ENCODE measurements at regions of chr16 and their contacts with region 1.

Region 1: GRCh38 chr16:54929090-54930004 is 1.3 kb upstream of the IRX5 start:
- DNase-seq: peak; percentile 99 to 100 (median 100)
- ATAC-seq: peak; percentile 91 to 97 (median 93)
- H3K4me3 ChIP-seq: peak overlapping the region; percentile 60 to 86 (median 74)
- H3K27ac ChIP-seq: peak overlapping the region; percentile 79 to 96 (median 90)
- H3K4me1 ChIP-seq: peaks cover 0 to 39% (median 7%) of the 10 kb centered on the region in 12 donors
- H3K27me3 ChIP-seq: peaks cover 0 to 71% (median 26%) of the 10 kb centered on the region in 9 donors
- CTCF ChIP-seq: peak in 4 of 12 donors; percentile 23 to 47 (median 30)
- POLR2A ChIP-seq: peak; percentile 49 to 60

Region 2: DNA sequence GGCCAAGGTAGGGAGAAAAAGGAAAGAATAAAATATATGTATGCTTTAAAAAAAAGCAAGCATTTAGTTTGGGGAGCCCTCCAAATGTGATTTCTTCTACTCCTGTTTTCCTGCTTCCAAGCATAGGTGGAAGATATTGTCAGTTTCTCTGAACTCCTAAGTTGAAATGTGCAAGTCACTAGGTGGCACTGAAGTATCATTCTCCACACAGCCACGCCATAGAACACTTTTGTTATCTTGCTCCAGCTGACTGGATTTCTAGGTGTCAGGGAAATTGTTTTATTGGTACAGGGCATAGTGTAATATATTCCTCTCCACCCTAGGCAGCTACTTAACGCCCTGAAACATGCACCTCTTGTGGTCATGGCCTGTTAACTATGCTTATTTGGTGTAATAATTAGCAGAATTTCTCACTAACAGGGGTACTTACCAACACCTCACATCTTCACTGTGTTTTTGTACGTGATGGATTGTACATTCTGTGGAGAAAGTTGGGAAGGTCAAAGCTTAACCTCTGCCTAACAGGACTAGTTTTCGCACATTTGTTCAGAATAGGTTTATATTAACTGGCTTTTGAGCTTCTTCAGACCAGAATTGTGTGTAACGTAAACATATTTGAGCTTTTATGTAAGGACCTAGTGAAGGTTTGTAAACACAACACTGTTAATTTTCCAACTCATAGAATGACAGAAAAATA is 1156.0 kb before region 1 on chr16:
- intact Hi-C with region 1: loop called in 1 of 10 experiments (anchors 10 kb)
- DNase-seq: peak in 4 of 5 donors; percentile 21 to 35 (median 26)
- ATAC-seq: peak; percentile 84 to 94 (median 89)
- H3K4me3 ChIP-seq: no peak overlapping the region
- H3K27ac ChIP-seq: peak overlapping the region in 10 of 12 donors; percentile 17 to 66 (median 46)
- H3K4me1 ChIP-seq: peaks cover 0 to 85% (median 37%) of the 10 kb centered on the region in 12 donors
- H3K27me3 ChIP-seq: no peaks in the 10 kb centered on the region
- CTCF ChIP-seq: peak; percentile 38 to 70 (median 60)
- POLR2A ChIP-seq: no peak

Region 3: DNA sequence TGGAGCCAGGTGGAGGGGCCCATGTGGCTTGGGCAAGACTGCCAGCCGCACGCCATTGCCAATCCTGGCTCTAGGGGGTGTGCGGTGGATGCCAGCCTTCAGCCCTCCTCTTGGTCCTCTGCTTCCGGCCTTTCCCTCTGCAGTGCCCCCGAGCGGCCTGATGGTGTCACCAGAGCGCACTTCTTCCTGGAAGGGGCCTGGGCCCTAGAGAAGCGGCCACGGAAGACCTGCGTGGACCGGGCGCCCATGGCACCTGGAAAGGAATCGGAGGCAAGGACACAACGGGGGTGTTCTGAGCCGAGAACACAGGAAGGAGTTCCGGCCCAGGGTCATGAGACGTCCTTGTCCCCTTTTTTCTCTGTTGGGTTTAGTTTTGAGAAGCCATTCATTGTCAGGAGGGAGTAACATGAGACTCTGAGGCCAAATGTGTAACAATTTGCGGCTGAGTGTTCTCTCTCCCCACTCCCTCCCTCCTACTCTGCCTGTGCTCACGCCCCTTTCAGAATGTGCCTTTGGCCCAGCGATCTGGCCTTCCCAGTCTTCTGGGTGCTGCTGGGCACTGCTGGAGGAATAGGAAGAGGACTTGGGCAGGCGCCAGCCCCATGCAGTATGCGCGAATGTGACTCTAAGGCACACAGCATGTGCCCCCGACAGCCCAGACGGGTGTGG is 735.5 kb before region 1 on chr16:
- intact Hi-C with region 1: loop called in 6 of 10 experiments (anchors 2 to 10 kb)
- DNase-seq: peak; percentile 77 to 90 (median 84)
- ATAC-seq: peak; percentile 85 to 90 (median 89)
- H3K4me3 ChIP-seq: peak overlapping the region in 10 of 12 donors; percentile 5 to 52 (median 32)
- H3K27ac ChIP-seq: peak overlapping the region; percentile 52 to 97 (median 84)
- H3K4me1 ChIP-seq: peaks cover 0 to 19% (median 8%) of the 10 kb centered on the region in 12 donors
- H3K27me3 ChIP-seq: no peaks in the 10 kb centered on the region
- CTCF ChIP-seq: peak; percentile 75 to 95 (median 87)
- POLR2A ChIP-seq: no peak

Region 4: GRCh38 chr16:54503011-54503855 is 426.1 kb before region 1 on chr16:
- intact Hi-C with region 1: loop called in 3 of 10 experiments (anchors 5 to 10 kb)
- DNase-seq: peak; percentile 69 to 92 (median 76)
- ATAC-seq: peak; percentile 91 to 96 (median 94)
- H3K4me3 ChIP-seq: no peak overlapping the region
- H3K27ac ChIP-seq: peak overlapping the region in 8 of 12 donors; percentile 54 to 87 (median 70)
- H3K4me1 ChIP-seq: peaks cover 0 to 65% (median 31%) of the 10 kb centered on the region in 12 donors
- H3K27me3 ChIP-seq: no peaks in the 10 kb centered on the region
- CTCF ChIP-seq: no peak
- POLR2A ChIP-seq: no peak

Region 5: GRCh38 chr16:54616610-54617009 is 312.7 kb before region 1 on chr16:
- intact Hi-C with region 1: no loop called
- DNase-seq: no peak
- ATAC-seq: no peak
- H3K4me3 ChIP-seq: no peak overlapping the region
- H3K27ac ChIP-seq: no peak overlapping the region
- H3K4me1 ChIP-seq: no peaks in the 10 kb centered on the region
- H3K27me3 ChIP-seq: no peaks in the 10 kb centered on the region
- CTCF ChIP-seq: no peak
- POLR2A ChIP-seq: no peak

Region 6: DNA sequence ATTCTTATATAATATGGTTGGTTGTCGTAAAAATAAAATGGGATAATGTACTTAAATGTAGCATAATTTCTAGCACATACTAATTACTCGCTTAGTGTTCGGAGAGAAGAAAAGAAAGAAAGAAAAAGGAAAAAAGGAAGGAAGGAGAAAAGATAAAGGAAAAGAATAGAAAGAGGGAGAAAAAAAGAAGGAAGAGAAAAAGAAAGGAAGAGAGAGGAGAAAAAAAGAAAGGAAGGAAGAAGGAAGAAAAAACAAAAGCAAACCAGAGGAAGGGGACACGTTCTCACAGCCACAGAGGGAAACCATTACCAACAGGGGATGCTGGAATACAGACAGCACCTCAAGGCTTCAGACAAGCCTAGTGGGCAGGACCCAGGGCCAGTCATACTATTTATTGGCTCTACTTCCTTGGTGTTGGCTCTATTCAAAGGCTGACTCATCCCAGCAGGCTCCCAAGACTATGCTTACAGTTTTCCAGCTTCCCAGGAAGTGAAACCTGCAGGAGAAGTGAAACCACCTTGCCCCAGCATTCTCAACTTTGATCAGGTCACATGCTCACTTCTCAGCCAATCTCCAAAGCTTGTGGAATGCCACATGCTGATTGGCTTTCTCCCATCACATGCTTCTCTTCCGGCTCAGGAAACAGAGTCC is 272.2 kb before region 1 on chr16:
- intact Hi-C with region 1: loop called in 1 of 10 experiments (anchors 10 kb)
- DNase-seq: peak in 1 of 5 donors; percentile 22
- ATAC-seq: peak in 2 of 4 donors; percentile 79 to 84
- H3K4me3 ChIP-seq: no peak overlapping the region
- H3K27ac ChIP-seq: no peak overlapping the region
- H3K4me1 ChIP-seq: peaks cover 0 to 35% (median 14%) of the 10 kb centered on the region in 12 donors
- H3K27me3 ChIP-seq: no peaks in the 10 kb centered on the region
- CTCF ChIP-seq: no peak
- POLR2A ChIP-seq: no peak

Region 7: DNA sequence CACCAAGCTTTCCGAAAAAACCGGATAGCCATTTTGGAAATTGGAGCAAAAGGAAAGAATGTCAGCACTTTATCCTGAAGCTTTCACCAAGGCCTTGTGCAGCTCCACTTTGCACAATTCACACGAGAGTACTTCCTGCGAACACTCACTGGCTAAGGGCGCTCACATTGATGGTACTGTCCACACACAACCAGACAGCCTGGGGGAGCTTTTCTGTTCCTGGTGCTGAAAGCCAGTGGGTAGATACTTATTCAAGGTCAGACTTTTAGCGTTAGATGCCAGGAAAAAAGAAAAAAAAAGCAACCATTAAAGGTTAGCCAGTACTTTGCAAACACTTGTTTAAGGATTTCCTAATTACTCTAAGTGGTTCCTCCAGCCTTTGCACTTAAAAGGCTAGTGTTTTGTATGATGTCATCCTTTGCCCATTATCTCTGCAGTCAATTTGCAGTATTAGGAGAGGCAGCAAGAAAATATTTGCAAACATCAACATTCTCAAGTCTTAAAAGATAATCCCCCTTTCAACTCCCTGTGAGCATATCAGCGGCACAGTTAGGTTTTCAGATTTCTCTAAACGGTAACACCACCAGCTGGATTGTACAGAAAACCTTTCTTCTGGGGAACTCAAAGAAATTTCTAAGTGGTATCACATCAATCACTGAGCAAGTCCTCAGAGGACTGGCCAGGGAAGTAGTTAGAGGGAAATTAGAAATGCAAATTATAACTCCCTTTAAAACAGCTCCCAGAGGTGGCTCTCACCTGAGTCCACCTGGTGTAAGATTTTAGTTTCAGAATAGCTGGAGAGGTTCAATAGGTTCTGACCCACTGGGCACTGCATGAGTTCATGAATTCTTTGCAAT is 242.1 kb before region 1 on chr16:
- intact Hi-C with region 1: no loop called
- DNase-seq: no peak
- ATAC-seq: no peak
- H3K4me3 ChIP-seq: no peak overlapping the region
- H3K27ac ChIP-seq: no peak overlapping the region
- H3K4me1 ChIP-seq: no peaks in the 10 kb centered on the region
- H3K27me3 ChIP-seq: no peaks in the 10 kb centered on the region
- CTCF ChIP-seq: no peak
- POLR2A ChIP-seq: no peak

Region 8: DNA sequence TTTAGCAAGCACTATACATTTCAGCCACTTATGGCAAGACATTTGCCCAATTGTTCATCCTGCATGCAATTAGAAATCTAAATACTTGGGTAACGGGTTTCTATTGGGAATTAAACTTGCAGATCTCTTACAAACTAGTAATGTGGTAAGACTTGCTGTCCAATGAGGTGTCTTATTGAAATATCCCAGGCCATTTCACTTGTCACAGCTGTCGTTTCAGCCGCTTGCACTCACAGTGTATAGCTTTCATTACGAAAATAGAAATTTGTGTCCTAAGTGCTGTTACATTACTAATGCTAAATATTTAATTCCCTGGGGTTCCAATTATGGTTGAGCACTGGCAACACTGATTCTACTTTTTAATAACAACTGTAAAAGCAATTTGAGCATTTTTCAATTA is 39.0 kb before region 1 on chr16:
- intact Hi-C with region 1: no loop called
- DNase-seq: no peak
- ATAC-seq: peak in 3 of 4 donors; percentile 75 to 85 (median 76)
- H3K4me3 ChIP-seq: peak overlapping the region in 5 of 12 donors; percentile 11 to 37 (median 24)
- H3K27ac ChIP-seq: peak overlapping the region in 4 of 12 donors; percentile 11 to 49 (median 34)
- H3K4me1 ChIP-seq: peaks cover 0 to 5% (median 0%) of the 10 kb centered on the region in 12 donors
- H3K27me3 ChIP-seq: no peaks in the 10 kb centered on the region
- CTCF ChIP-seq: no peak
- POLR2A ChIP-seq: no peak

Region 9: DNA sequence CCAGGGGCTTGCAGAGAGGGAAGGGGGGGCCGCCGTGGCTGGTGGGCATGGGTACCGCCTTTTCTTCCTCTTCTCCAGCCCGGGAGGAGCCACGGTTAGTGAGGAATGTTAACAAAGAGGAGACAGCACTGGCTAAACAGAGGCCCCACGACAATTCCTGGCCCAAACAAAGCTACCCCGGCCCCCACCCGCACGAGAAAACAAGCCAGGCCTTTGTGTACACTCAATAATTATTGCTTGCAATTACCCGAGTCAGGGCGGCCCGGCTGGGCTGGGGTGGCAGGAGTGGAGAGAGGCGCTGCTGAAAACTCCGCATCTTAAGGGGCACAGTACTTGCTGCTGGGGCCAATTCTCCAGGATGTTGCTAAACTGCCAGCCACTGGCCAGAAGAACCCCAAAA is 57.7 kb after region 1 on chr16:
- intact Hi-C with region 1: no loop called
- DNase-seq: no peak
- ATAC-seq: no peak
- H3K4me3 ChIP-seq: no peak overlapping the region
- H3K27ac ChIP-seq: no peak overlapping the region
- H3K4me1 ChIP-seq: peaks cover 0 to 22% (median 5%) of the 10 kb centered on the region in 12 donors
- H3K27me3 ChIP-seq: peaks cover 0 to 4% (median 0%) of the 10 kb centered on the region in 9 donors
- CTCF ChIP-seq: no peak
- POLR2A ChIP-seq: no peak

Region 10: DNA sequence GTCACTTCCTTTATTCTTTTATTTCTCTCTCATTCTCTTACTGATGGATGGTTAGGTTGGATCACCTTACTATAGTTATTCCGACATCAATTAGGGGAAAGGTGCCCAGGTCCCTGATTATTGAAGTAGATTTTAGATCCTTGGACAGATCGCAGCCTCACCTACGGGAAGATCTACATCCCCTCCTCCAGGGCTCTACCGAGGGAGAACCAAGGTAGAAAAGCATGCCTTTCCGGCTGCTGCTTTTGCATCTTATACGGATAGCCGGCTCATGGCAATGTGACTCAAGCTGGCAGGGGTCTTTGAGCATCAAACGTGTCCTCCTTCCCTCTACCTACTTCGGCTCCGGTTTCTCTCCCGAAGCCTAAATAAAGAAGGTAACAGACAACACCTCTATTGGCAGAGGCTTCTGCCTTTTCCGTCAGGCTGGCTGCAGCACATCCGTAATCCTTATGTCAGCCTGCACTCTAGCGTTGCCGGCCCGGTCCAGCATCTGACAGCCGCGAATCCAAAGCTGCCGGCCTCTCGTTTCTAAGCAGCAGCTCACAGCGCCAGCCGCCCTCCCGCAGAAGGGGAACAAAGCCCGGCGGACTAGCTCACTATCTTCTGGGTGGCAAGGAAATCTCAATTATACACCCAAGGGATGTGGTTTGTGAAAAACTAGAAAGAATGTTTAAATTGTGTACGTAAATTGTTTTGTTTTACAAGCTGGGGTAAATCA is 441.6 kb after region 1 on chr16:
- intact Hi-C with region 1: loop called in 3 of 10 experiments (anchors 5 to 10 kb)
- DNase-seq: peak; percentile 76 to 86 (median 83)
- ATAC-seq: peak; percentile 65 to 86 (median 82)
- H3K4me3 ChIP-seq: peak overlapping the region in 6 of 12 donors; percentile 8 to 26 (median 16)
- H3K27ac ChIP-seq: peak overlapping the region in 8 of 12 donors; percentile 55 to 93 (median 88)
- H3K4me1 ChIP-seq: peaks cover 0 to 60% (median 30%) of the 10 kb centered on the region in 12 donors
- H3K27me3 ChIP-seq: peaks cover 0 to 35% (median 0%) of the 10 kb centered on the region in 9 donors
- CTCF ChIP-seq: peak; percentile 26 to 78 (median 59)
- POLR2A ChIP-seq: peak in 1 of 2 donors; percentile 26